ENCODE measurements at regions of chr2 and their contacts with region 1.

Region 1: DNA sequence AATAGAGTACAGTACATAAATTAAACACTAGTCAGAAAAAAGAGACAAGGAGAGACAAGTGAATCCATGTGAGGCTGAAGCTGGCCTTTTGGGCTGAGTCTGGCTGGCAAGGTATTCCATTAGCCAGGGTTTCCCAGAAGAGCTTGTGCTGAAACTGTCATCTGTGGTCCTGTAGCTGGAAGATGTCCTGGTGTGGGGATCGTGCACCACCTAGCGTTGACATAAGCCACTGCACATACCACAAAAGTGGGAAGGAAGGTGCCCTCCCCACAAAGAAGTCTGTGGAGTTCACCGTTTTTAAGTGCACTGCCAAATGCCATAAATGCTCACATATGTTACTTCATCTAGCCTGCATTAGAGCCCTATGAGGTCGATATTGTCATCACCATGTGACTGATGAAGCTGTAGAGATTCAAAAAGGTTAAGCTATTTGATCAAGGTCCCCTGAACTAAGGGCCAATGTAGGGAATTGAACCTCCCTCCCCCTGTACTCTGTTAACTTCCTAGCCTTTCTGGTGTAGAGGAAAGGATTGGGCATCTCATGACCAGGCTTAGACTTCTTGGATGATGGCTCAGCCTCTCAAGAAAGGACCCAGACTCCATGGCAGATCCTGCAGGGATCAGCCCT is 31.9 kb upstream of the GALNT14 start:
- DNase-seq: peak; percentile 42
- ATAC-seq: peak; percentile 97
- H3K4me3 Mint-ChIP-seq: no peak overlapping the region
- H3K27ac Mint-ChIP-seq: no peak overlapping the region
- H3K4me1 Mint-ChIP-seq: peaks cover 25% of the 10 kb centered on the region
- H3K27me3 Mint-ChIP-seq: no peaks in the 10 kb centered on the region
- CTCF ChIP-seq: peak; percentile 30

Region 2: DNA sequence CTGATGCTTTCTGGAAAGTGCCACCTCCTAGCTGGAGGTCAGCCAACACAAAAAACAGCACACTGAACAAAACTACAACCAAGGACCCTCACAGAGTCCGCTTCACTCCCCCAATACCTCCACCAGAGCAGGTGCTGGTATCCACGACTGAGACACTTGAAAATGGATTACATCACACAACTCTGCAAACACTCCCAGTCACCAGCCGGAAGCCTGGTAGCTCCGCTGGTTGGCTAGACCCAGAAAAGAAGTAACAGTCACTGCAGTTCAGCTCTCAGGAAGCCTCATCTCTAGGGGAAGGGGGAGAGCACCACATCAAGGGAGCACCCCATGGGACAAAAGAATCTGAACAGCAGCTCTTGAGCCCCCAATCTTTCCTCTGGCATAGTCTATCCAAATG is 547.7 kb before region 1 on chr2:
- CTCF ChIA-PET with region 1: no interaction called
- POLR2A ChIA-PET with region 1: no interaction called
- intact Hi-C with region 1: no loop called
- DNase-seq: no peak
- ATAC-seq: no peak
- H3K4me3 Mint-ChIP-seq: no peak overlapping the region
- H3K27ac Mint-ChIP-seq: no peak overlapping the region
- H3K4me1 Mint-ChIP-seq: peaks cover 42% of the 10 kb centered on the region
- H3K27me3 Mint-ChIP-seq: no peaks in the 10 kb centered on the region
- CTCF ChIP-seq: no peak

Region 3: DNA sequence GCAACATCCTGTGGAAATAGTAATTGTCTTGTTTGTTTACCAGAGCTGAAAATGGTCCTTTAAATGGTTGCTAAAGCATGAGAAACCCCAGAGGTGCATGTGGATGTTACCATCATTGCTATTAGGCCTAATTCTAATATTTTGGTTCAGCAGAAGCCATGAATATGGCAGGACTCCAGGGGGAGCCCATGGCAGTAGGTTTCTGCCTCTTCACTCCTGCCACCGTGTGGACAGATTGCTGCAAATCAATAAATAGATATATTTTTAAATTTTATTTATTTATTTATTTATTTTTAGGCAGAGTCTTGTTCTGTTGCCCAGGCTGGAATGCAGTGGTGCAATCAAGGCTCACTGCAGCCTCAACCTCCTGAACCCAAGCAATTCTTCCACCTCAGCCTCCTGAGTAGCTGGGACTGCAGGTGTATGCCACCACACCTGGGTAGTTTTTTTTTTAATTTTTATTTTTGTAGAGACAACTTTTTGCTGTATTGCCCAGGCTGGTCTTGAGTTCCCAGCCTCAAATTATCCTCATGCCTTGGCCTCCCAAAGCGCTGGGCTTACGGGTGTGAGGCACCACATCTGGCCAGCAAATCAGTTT is 308.0 kb before region 1 on chr2:
- CTCF ChIA-PET with region 1: interaction called, 61 read pairs
- POLR2A ChIA-PET with region 1: interaction called, 6 read pairs
- intact Hi-C with region 1: loop called (anchors 1 kb)
- DNase-seq: no peak
- ATAC-seq: peak; percentile 76
- H3K4me3 Mint-ChIP-seq: no peak overlapping the region
- H3K27ac Mint-ChIP-seq: no peak overlapping the region
- H3K4me1 Mint-ChIP-seq: peaks cover 18% of the 10 kb centered on the region
- H3K27me3 Mint-ChIP-seq: peaks cover 2% of the 10 kb centered on the region
- CTCF ChIP-seq: no peak

Region 4: DNA sequence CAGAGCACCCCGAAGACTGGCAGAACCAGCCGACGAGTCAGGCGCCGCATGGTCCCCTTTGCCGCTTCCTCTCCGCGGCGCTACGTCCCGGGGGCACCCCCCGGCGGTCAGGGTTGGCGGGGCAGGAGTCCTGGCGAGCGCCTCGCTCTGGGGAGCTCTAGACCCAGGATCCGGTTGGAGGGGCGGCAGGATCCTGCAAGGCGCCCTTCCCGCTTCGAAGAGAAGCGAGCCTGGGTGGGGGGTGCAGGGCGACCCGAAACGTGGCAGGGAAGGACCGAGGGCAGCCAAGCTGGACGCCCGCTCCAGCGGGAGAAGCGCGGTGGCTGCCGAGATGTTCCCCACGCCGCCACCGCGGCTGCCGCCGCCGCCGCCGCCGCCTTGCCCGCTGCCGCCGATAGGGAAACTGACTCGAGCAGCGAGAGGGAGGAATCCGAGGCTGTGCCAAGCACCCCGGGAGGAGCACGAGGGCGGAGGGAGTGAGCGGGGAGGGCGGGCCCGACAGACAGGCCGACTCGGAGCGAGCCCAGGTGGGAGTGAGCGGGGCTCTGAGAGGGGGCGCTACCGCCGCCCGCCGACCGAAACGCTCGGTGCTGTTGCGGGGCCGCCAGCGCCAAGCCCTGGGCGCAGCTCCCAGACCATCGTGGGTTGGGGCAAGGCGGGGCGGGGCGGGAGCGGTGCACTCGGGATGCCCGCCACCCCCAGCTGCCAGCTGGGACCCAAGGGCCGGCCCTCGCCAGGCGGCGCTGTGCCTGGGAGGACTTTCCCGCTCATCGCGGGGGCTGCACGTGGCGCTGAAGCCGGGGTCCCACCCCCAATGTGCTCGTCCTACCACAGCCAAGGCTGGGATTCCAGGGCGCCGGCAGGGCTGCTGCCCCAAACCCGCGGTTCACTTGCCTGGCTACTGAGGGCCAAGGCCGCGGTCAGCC is 31.9 kb before region 1 on chr2 and contains the start of gene GALNT14:
- CTCF ChIA-PET with region 1: interaction called, 17 read pairs
- POLR2A ChIA-PET with region 1: interaction called, 4 read pairs
- intact Hi-C with region 1: loop called (anchors 1 kb)
- DNase-seq: peak; percentile 64
- ATAC-seq: peak; percentile 76
- H3K4me3 Mint-ChIP-seq: peak within 1 kb of the TSS; percentile 85
- H3K27ac Mint-ChIP-seq: no peak within 1 kb of the TSS
- H3K4me1 Mint-ChIP-seq: peaks cover 8% of the 10 kb centered on the region
- H3K27me3 Mint-ChIP-seq: peaks cover 5% of the 10 kb centered on the region
- CTCF ChIP-seq: no peak
- total RNA-seq, gene GALNT14: 6.6 and 7.9 TPM in 2 replicates

Region 5: GRCh38 chr2:31213623-31214443 is 43.6 kb after region 1 on chr2:
- CTCF ChIA-PET with region 1: interaction called, 15 read pairs
- POLR2A ChIA-PET with region 1: no interaction called
- intact Hi-C with region 1: loop called (anchors 1 kb)
- DNase-seq: no peak
- ATAC-seq: peak; percentile 22
- H3K4me3 Mint-ChIP-seq: peak overlapping the region; percentile 44
- H3K27ac Mint-ChIP-seq: peak overlapping the region; percentile 99
- H3K4me1 Mint-ChIP-seq: peaks cover 63% of the 10 kb centered on the region
- H3K27me3 Mint-ChIP-seq: no peaks in the 10 kb centered on the region
- CTCF ChIP-seq: no peak

Region 6: GRCh38 chr2:31255911-31256571 is 85.9 kb after region 1 on chr2:
- CTCF ChIA-PET with region 1: interaction called, 49 read pairs
- POLR2A ChIA-PET with region 1: interaction called, 10 read pairs
- intact Hi-C with region 1: loop called (anchors 2 kb)
- DNase-seq: peak; percentile 58
- ATAC-seq: peak; percentile 70
- H3K4me3 Mint-ChIP-seq: peak overlapping the region; percentile 72
- H3K27ac Mint-ChIP-seq: peak overlapping the region; percentile 84
- H3K4me1 Mint-ChIP-seq: peaks cover 85% of the 10 kb centered on the region
- H3K27me3 Mint-ChIP-seq: no peaks in the 10 kb centered on the region
- CTCF ChIP-seq: no peak

Region 7: GRCh38 chr2:31318361-31319336 is 148.5 kb after region 1 on chr2:
- CTCF ChIA-PET with region 1: interaction called, 10 read pairs
- POLR2A ChIA-PET with region 1: interaction called, 4 read pairs
- intact Hi-C with region 1: no loop called
- DNase-seq: peak; percentile 60
- ATAC-seq: peak; percentile 97
- H3K4me3 Mint-ChIP-seq: peak overlapping the region; percentile 66
- H3K27ac Mint-ChIP-seq: peak overlapping the region; percentile 83
- H3K4me1 Mint-ChIP-seq: peaks cover 51% of the 10 kb centered on the region
- H3K27me3 Mint-ChIP-seq: no peaks in the 10 kb centered on the region
- CTCF ChIP-seq: no peak

Region 8: DNA sequence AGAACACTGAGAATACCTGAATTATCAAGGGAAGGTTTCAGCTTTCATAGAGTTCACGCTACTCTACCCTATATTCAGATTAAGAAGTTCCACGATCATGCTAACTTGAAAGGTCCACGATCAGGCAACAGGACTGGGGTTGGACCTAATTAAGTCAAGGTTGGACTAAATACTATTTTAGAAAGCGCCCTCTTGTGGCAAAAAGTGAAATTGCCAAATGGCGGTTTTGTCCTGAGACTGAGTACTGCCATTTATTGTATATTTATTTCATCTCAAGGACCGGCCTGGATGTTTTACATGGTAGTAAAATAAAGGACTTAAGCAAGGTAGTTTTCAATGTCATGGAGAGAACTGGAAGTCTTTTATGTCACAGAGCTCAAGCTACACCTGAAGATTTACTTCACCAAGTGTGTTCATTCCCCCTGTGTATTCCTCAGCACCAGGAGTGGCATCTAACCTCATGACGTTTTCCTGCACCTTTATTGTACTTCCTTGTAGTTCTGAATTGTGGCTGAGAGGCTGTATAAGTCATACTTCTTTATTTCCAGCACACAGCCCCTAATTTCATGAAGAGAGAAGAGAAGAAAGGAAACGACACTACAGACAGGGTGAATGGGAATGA is 353.8 kb after region 1 on chr2:
- CTCF ChIA-PET with region 1: no interaction called
- POLR2A ChIA-PET with region 1: no interaction called
- intact Hi-C with region 1: loop called (anchors 2 kb)
- DNase-seq: no peak
- ATAC-seq: no peak
- H3K4me3 Mint-ChIP-seq: no peak overlapping the region
- H3K27ac Mint-ChIP-seq: no peak overlapping the region
- H3K4me1 Mint-ChIP-seq: no peaks in the 10 kb centered on the region
- H3K27me3 Mint-ChIP-seq: peaks cover 30% of the 10 kb centered on the region
- CTCF ChIP-seq: peak; percentile 21

Measured in activated B cell treated with CpG ODN at 0.5 μM for 24 hours (primary cell).